Right lobe of liver (tissue), 6 donors: ENCODE measurements at regions of chr19 and their contacts with region 1.

Region 1: GRCh38 chr19:48674921-48675824 is 2.4 kb upstream of the NTN5 start:
- DNase-seq: peak; percentile 77 to 81 (median 79)
- ATAC-seq: peak; percentile 83 to 94 (median 91)
- H3K4me3 ChIP-seq: no peak overlapping the region
- H3K27ac ChIP-seq: peak overlapping the region; percentile 8 to 54 (median 43)
- H3K4me1 ChIP-seq: peaks cover 0 to 6% (median 3%) of the 10 kb centered on the region in 4 donors
- H3K27me3 ChIP-seq: no peaks in the 10 kb centered on the region
- CTCF ChIP-seq: peak; percentile 85 to 91 (median 87)
- POLR2A ChIP-seq: no peak

Region 2: GRCh38 chr19:48608798-48609263 is 66.3 kb before region 1 on chr19:
- intact Hi-C with region 1: no loop called
- DNase-seq: no peak
- ATAC-seq: peak; percentile 22 to 39 (median 32)
- H3K4me3 ChIP-seq: no peak overlapping the region
- H3K27ac ChIP-seq: no peak overlapping the region
- H3K4me1 ChIP-seq: peaks cover 0 to 3% (median 0%) of the 10 kb centered on the region in 4 donors
- H3K27me3 ChIP-seq: no peaks in the 10 kb centered on the region
- CTCF ChIP-seq: peak; percentile 4 to 37 (median 28)
- POLR2A ChIP-seq: no peak

Region 3: DNA sequence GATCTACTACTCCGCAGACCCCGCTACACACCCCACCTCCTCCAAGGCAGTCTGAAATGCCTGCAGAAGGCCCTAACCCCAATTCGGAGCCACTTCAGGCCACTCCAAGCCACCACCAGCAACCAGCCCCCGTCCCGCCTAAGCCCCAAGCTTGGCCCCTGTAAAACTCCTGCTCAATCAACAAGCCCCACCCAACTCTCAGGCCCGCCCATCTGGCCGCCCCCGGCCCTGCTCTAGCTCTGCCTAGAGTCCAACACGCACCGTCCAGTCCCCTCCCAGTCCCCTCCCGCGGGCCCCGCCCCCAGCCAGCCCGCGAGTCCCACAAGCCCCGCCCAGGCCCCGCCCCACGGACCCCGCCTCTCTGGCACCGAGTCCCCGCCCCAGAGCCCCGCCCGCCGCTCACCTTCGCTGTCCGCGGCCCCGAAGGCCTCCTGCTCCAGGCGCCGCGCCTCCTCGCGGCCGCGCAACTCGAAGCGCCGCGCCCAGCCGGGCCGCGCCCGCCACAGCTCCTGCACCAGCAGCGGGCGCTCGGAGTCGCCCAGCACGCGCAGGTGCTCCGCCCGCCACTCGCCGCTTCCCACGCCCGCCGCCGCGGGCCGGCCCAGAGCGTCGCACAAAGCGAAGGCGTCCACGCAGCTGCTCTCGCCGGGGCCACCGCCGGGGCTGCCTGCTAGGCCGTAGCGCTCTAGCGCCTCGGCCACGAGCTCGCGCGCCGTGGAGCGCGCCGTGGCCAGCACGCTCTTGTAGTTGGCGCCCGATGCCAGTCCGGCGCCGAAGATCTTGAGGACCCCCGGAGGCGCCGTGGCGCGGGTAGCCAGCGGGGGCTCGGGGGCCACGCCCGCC is 63.6 kb after region 1 on chr19:
- intact Hi-C with region 1: loop called in 1 of 2 experiments (anchors 10 kb)
- DNase-seq: peak; percentile 97 to 98 (median 98)
- ATAC-seq: peak; percentile 86 to 95 (median 92)
- H3K4me3 ChIP-seq: peak overlapping the region; percentile 47 to 58 (median 54)
- H3K27ac ChIP-seq: peak overlapping the region; percentile 59 to 72 (median 67)
- H3K4me1 ChIP-seq: peaks cover 0 to 5% (median 0%) of the 10 kb centered on the region in 4 donors
- H3K27me3 ChIP-seq: no peaks in the 10 kb centered on the region
- CTCF ChIP-seq: peak; percentile 38 to 71 (median 52)
- POLR2A ChIP-seq: peak; percentile 46

Region 4: GRCh38 chr19:48760504-48761205 is 85.5 kb after region 1 on chr19:
- intact Hi-C with region 1: loop called in 1 of 2 experiments (anchors 10 kb)
- DNase-seq: no peak
- ATAC-seq: peak in 2 of 4 donors; percentile 1 to 15
- H3K4me3 ChIP-seq: no peak overlapping the region
- H3K27ac ChIP-seq: peak overlapping the region in 2 of 3 donors; percentile 1 to 53
- H3K4me1 ChIP-seq: peaks cover 0 to 21% (median 5%) of the 10 kb centered on the region in 4 donors
- H3K27me3 ChIP-seq: no peaks in the 10 kb centered on the region
- CTCF ChIP-seq: no peak
- POLR2A ChIP-seq: no peak

Region 5: GRCh38 chr19:48835734-48836088 is 160.5 kb after region 1 on chr19:
- intact Hi-C with region 1: loop called (anchors 10 kb)
- DNase-seq: peak; percentile 93 to 95 (median 94)
- ATAC-seq: peak; percentile 90 to 96 (median 92)
- H3K4me3 ChIP-seq: peak overlapping the region; percentile 36 to 62 (median 49)
- H3K27ac ChIP-seq: peak overlapping the region; percentile 82 to 89 (median 89)
- H3K4me1 ChIP-seq: peaks cover 0 to 12% (median 0%) of the 10 kb centered on the region in 4 donors
- H3K27me3 ChIP-seq: no peaks in the 10 kb centered on the region
- CTCF ChIP-seq: peak; percentile 91 to 94 (median 92)
- POLR2A ChIP-seq: no peak